ENCODE measurements at regions of chr16 and their contacts with region 1.

Region 1: DNA sequence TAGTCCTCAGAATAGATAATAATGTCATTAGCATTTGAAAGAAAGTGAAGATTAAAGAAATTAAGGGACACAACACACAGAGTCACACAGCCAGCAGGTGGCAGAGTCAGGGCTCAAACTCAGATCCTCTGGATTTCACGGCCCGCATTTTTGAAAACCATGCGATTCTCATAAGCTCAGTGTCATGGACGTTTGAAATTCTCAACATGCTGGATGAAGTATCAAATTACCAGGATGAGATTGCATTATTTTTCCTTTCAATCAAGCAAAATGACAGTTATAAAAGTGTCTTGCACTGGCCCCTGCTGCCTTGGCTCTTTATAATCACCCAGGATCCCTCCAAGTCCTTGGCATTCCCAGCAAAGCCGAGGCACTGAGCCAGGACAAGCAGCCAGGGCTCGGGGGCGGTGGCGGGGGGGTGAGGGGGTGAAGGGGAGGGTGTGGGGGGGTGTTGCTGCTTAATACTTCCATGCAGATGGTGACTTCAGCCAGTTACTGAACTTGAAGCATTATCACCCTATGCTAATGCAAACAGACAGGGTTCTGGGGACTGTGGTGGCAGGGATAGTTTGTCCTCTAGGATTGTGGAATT is 6.6 kb upstream of the BMERB1 start:
- DNase-seq: peak; percentile 71 to 82
- ATAC-seq: peak; percentile 75 to 84 (median 80)
- H3K4me3 ChIP-seq: peak overlapping the region; percentile 34
- H3K27ac ChIP-seq: peak overlapping the region; percentile 36
- H3K4me1 ChIP-seq: peaks cover 6% of the 10 kb centered on the region
- H3K27me3 ChIP-seq: no peaks in the 10 kb centered on the region
- CTCF ChIP-seq: peak; percentile 64

Region 2: GRCh38 chr16:15404792-15405191 is 23.0 kb before region 1 on chr16:
- intact Hi-C with region 1: no loop called
- DNase-seq: peak; percentile 64 to 84
- ATAC-seq: peak; percentile 92 to 96 (median 94)
- H3K4me3 ChIP-seq: no peak overlapping the region
- H3K27ac ChIP-seq: peak overlapping the region; percentile 90
- H3K4me1 ChIP-seq: peaks cover 5% of the 10 kb centered on the region
- H3K27me3 ChIP-seq: no peaks in the 10 kb centered on the region
- CTCF ChIP-seq: no peak

Region 3: GRCh38 chr16:15460404-15460967 is 32.7 kb after region 1 on chr16:
- intact Hi-C with region 1: loop called in 1 of 2 experiments (anchors 5 kb)
- DNase-seq: no peak
- ATAC-seq: no peak
- H3K4me3 ChIP-seq: no peak overlapping the region
- H3K27ac ChIP-seq: no peak overlapping the region
- H3K4me1 ChIP-seq: no peaks in the 10 kb centered on the region
- H3K27me3 ChIP-seq: no peaks in the 10 kb centered on the region
- CTCF ChIP-seq: no peak